ENCODE measurements at regions of chr6 and their contacts with region 1.

Region 1: GRCh38 chr6:118709859-118710350 is 58.5 kb upstream of the CEP85L start:
- DNase-seq: peak; percentile 79 to 88 (median 85)
- H3K4me3 ChIP-seq: peak overlapping the region; percentile 95
- H3K4me3 Mint-ChIP-seq: peak overlapping the region; percentile 91 to 99 (median 95)
- H3K27ac ChIP-seq: peak overlapping the region; percentile 70
- H3K27ac Mint-ChIP-seq: peak overlapping the region; percentile 92 to 98 (median 98)
- H3K4me1 ChIP-seq: peaks cover 75% of the 10 kb centered on the region
- H3K4me1 Mint-ChIP-seq: peaks cover 56 to 94% (median 66%) of the 10 kb centered on the region in 4 donors
- H3K27me3 ChIP-seq: no peaks in the 10 kb centered on the region
- H3K27me3 Mint-ChIP-seq: no peaks in the 10 kb centered on the region

Region 2: DNA sequence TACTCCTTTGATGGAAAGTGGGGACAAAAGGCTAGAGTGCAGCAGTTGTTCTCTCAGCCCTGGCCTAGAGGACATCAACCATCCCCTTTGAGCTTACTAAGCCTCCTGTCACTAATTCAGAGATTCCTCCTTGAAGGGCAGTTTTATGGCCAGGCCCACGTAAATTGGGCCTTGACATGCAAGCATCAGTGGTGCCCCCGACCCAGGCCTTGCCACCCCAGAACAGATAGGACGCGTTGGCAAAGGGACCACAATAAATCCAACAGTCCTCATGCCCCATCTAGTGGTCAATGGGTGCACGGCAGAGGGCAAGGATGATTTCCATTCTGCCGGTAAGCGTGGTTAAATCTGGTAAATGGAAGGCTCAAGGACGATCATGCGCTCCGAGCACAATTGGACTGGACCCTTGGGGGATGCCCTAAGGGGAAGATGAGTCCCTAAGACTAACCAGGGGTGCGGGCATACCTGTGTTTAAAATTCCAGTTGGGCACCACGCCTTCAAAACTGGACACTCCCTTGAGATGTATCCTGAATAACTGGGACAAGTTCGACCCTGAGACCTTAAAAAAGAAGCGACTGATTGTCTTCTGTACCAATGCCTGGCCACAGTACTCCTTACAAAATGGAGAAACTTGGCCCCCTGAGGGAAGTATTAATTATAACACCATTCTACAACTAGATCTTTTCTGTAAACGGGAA is 91.1 kb before region 1 on chr6:
- CTCF ChIA-PET with region 1: interaction called, 3 read pairs
- POLR2A ChIA-PET with region 1: no interaction called
- intact Hi-C with region 1: loop called (anchors 1 kb)
- DNase-seq: peak; percentile 54 to 62 (median 57)
- H3K4me3 ChIP-seq: no peak overlapping the region
- H3K4me3 Mint-ChIP-seq: peak overlapping the region in 4 of 8 donors; percentile 8 to 59 (median 42)
- H3K27ac ChIP-seq: no peak overlapping the region
- H3K27ac Mint-ChIP-seq: peak overlapping the region in 6 of 7 donors; percentile 79 to 93 (median 84)
- H3K4me1 ChIP-seq: peaks cover 22% of the 10 kb centered on the region
- H3K4me1 Mint-ChIP-seq: peaks cover 41 to 72% (median 54%) of the 10 kb centered on the region in 4 donors
- H3K27me3 ChIP-seq: no peaks in the 10 kb centered on the region
- H3K27me3 Mint-ChIP-seq: no peaks in the 10 kb centered on the region

Region 3: DNA sequence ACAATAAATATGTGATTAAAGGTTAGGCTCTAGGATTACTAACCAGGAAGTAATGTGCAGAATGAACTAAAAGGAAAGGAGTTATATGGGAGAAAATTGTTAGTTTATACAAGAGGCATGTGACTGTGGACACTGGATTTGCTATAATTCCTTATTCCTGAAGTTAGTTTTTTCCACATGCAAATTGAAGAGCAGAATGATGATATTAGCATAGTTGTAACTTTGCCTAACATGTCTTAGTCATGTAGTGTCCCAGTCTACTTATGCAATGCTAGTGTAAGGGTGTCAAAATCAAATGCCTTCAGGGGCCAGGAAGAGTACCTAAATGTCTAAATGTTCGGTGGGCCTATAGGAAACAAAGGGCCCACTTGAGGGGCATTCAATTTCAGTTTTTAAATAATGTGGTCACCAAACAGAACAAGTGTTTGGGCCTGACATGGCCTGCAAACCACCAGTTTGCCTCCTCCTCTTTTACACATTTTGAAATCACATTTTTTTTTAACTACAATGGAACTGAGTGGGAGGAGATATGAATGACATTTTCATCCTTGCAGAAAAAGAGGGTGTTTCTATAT is 30.5 kb before region 1 on chr6:
- CTCF ChIA-PET with region 1: no interaction called
- POLR2A ChIA-PET with region 1: interaction called, 38 read pairs
- intact Hi-C with region 1: no loop called
- DNase-seq: no peak
- H3K4me3 ChIP-seq: no peak overlapping the region
- H3K4me3 Mint-ChIP-seq: peak overlapping the region in 4 of 8 donors; percentile 8 to 59 (median 48)
- H3K27ac ChIP-seq: no peak overlapping the region
- H3K27ac Mint-ChIP-seq: peak overlapping the region in 4 of 7 donors; percentile 16 to 54 (median 32)
- H3K4me1 ChIP-seq: peaks cover 50% of the 10 kb centered on the region
- H3K4me1 Mint-ChIP-seq: peaks cover 54 to 72% (median 66%) of the 10 kb centered on the region in 4 donors
- H3K27me3 ChIP-seq: no peaks in the 10 kb centered on the region
- H3K27me3 Mint-ChIP-seq: no peaks in the 10 kb centered on the region

Region 4: GRCh38 chr6:118735320-118735719 is 25.4 kb after region 1 on chr6:
- CTCF ChIA-PET with region 1: interaction called, 10 read pairs
- POLR2A ChIA-PET with region 1: interaction called, 11 read pairs
- intact Hi-C with region 1: no loop called
- DNase-seq: peak in 1 of 5 donors; percentile 28
- H3K4me3 ChIP-seq: no peak overlapping the region
- H3K4me3 Mint-ChIP-seq: no peak overlapping the region
- H3K27ac ChIP-seq: no peak overlapping the region
- H3K27ac Mint-ChIP-seq: peak overlapping the region in 1 of 7 donors; percentile 22
- H3K4me1 ChIP-seq: no peaks in the 10 kb centered on the region
- H3K4me1 Mint-ChIP-seq: peaks cover 6 to 17% (median 13%) of the 10 kb centered on the region in 4 donors
- H3K27me3 ChIP-seq: no peaks in the 10 kb centered on the region
- H3K27me3 Mint-ChIP-seq: peaks cover 0 to 3% of the 10 kb centered on the region in 2 donors

Region 5: DNA sequence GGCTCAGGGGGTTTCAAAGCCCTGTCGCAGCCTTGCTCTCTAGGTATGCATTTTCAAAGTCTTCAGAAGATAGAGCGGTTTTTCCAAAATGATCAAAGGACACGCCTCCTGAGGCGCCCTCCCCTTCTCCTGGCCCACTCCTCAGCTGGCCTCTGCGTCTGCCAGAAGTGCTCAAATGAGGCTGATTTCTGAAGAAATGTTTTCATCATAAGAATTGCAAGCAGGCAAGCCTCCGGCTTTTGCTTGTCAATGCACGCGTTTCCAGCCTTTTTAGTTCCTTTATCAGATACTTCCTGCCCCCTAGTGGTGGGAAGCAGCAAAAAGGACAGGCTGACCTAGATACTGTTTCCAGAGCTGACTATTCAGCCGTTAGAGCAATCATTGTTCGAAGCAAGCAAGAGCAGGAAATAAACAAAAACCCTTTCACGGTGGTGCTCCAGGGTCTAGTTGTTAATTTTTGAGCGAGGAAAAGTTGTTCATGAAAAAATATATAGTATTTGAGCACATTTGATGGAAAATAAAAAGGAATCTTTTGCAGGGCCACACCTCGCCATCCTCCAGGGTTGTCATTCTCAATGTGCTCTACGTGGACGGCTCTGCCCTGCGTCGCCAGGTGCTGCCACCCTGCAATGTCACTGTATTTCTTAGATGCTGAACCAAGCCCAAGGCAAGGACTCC is 90.6 kb after region 1 on chr6:
- CTCF ChIA-PET with region 1: interaction called, 26 read pairs
- POLR2A ChIA-PET with region 1: interaction called, 54 read pairs
- intact Hi-C with region 1: loop called (anchors 1 kb)
- DNase-seq: peak; percentile 87 to 90 (median 87)
- H3K4me3 ChIP-seq: no peak overlapping the region
- H3K4me3 Mint-ChIP-seq: peak overlapping the region; percentile 52 to 86 (median 65)
- H3K27ac ChIP-seq: peak overlapping the region; percentile 11
- H3K27ac Mint-ChIP-seq: peak overlapping the region; percentile 71 to 96 (median 93)
- H3K4me1 ChIP-seq: peaks cover 30% of the 10 kb centered on the region
- H3K4me1 Mint-ChIP-seq: peaks cover 29 to 53% (median 39%) of the 10 kb centered on the region in 4 donors
- H3K27me3 ChIP-seq: no peaks in the 10 kb centered on the region
- H3K27me3 Mint-ChIP-seq: no peaks in the 10 kb centered on the region

Region 6: DNA sequence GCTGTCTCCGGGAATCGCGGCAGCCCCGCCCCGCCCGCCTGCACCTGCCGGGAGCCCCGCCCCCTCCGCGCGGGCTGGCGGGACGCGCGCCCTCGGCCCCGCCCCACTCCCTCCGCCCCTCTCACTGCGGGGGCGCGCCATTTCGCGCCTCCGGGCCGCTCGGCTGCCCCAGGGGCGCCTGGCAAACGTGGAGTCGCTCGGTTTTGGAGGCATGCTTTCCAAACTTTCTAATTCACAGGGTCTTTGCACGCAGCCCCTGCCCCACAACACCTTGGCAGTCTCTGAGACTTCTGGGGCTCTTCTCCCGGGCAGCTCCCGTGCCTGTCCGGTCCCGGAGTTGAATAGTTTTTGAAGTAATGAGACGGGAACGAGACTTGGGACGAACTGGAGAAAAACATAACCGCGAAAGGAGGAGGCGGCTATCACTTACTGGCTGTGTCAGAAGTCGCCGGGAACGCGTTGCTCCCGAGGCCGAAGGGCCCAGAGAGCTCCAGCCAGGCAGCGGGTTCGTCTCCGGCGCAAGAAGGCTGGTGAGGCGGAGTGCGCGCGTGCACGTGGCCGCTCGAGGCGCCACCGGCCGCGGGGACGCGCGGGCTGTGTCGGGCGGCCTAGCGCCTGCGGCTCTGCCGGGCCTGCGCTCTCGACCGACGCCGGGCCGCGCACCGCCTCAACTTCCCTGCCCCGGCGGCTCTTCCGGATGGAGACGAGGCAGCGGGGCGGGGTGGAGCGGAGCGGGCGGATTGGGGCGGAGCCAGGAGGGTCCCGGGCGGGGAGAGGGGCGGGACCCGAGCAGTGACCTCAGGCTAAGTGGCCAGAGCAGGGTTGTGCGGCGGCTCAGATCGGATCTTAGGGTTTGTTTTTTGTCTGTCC is 224.8 kb after region 1 on chr6 and contains the start of gene MCM9:
- CTCF ChIA-PET with region 1: no interaction called
- POLR2A ChIA-PET with region 1: interaction called, 17 read pairs
- intact Hi-C with region 1: no loop called
- DNase-seq: peak; percentile 84 to 88 (median 85)
- H3K4me3 ChIP-seq: peak within 1 kb of the TSS; percentile 88 to 98
- H3K4me3 Mint-ChIP-seq: peak within 1 kb of the TSS; percentile 90 to 94 (median 91)
- H3K27ac ChIP-seq: peak within 1 kb of the TSS; percentile 84
- H3K27ac Mint-ChIP-seq: peak within 1 kb of the TSS; percentile 89 to 96 (median 93)
- H3K4me1 ChIP-seq: peaks cover 19% of the 10 kb centered on the region
- H3K4me1 Mint-ChIP-seq: peaks cover 21 to 43% (median 25%) of the 10 kb centered on the region in 4 donors
- H3K27me3 ChIP-seq: no peaks in the 10 kb centered on the region
- H3K27me3 Mint-ChIP-seq: no peaks in the 10 kb centered on the region
- total RNA-seq, gene MCM9: 33.8 to 36.6 TPM